Activated T-helper 2 cell treated with anti-CD3 and anti-CD28 coated beads, Interferon-gamma antibody, Interleukin-2, Interleukin-4, amounts not matched to agents 10 μg/mL and 5 μg/mL and 100 μg/mL, durations not matched to agents 14 hours and 24 hours and 36 hours (primary cell): ENCODE measurements at regions of chr18 and their contacts with region 1.

Region 1: DNA sequence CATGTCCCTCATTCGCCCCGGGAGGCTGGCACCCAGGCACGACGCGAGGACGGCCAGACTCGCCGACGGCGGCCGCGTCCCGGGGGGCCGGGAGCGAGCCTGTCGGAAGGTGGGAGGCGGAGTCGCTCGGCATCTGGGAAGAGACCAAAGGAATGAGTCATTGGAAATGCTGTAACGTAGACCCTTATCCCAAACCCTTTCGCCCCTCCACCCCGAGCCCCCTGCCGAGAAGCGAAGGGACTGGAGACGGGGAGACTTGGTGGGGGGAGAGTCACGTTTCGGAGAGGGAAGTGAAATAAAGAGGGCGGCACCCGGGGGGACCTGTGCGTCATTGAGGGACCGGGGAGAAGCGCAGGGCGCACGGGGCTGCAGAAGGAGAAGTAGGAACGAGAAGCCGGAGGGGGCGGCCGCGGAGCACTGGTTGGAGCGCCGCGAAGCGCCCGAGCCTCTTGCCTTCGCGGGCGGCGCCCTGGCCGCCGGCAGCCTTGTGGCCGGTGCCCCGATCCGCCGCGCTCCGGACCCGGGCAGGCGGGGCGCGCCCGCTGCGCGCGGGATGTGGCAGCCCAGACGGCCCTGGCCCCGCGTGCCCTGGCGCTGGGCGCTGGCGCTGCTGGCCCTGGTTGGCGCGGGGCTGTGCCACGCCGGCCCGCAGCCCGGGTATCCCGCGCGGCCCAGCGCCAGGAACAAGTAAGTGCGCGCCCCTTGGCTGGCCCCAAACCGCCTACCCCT is at the start of gene EMILIN2:
- DNase-seq: peak; percentile 49
- H3K4me3 Mint-ChIP-seq: peak within 1 kb of the TSS; percentile 93
- H3K27ac Mint-ChIP-seq: peak within 1 kb of the TSS; percentile 95
- H3K4me1 Mint-ChIP-seq: peaks cover 36% of the 10 kb centered on the region
- H3K27me3 Mint-ChIP-seq: peaks cover 14% of the 10 kb centered on the region
- total RNA-seq, gene EMILIN2: 53.4 and 53.5 TPM in 2 replicates

Region 2: GRCh38 chr18:2536493-2536892 is 310.3 kb before region 1 on chr18:
- intact Hi-C with region 1: no loop called
- DNase-seq: no peak
- H3K4me3 Mint-ChIP-seq: no peak overlapping the region
- H3K27ac Mint-ChIP-seq: no peak overlapping the region
- H3K4me1 Mint-ChIP-seq: no peaks in the 10 kb centered on the region
- H3K27me3 Mint-ChIP-seq: no peaks in the 10 kb centered on the region

Region 3: DNA sequence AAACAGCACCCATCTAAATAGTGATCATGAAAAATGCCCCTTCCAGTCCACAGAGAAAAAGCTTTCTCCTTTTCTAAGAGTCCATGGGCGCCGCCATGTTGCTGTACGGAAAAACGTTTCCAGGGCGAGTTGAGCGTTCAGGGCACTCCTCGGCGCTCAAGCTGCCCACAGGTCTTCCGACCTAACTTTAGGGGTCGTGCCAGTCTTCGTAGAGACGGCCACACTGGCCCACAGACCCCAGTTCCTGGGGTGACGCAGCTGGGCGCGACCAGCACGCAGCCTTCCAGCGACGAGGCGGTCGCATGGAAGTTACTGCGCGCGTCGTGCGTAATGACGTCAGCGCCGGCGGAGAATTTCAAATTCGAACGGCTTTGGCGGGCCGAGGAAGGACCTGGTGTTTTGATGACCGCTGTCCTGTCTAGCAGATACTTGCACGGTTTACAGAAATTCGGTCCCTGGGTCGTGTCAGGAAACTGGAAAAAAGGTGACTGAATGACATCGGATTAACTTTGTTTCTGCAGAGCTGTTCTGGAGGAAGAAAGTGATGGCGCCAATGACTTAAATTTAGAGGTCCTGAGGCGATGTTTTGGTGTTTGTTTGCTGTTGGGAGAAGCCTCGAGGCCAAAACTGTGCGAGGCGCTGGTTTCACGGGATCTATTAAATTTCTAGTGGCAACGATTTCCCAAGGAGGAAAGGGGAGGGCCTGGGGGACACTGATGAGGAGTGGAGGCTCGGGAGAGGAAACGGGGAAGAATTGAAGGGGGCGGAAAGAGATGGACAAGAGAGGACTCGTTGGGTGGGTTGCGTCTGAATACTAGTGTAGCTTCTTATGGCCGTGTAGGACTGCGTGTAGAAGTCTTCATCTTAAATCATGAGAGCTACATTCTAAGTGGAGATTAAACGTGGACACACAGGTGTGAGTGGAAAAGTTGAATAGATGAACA is 275.3 kb before region 1 on chr18 and contains the starts of genes METTL4 and NDC80:
- intact Hi-C with region 1: loop called (anchors 10 kb)
- DNase-seq: peak; percentile 82
- H3K4me3 Mint-ChIP-seq: peak within 1 kb of the TSS; percentile 99
- H3K27ac Mint-ChIP-seq: peak within 1 kb of the TSS; percentile 98
- H3K4me1 Mint-ChIP-seq: peaks cover 52% of the 10 kb centered on the region
- H3K27me3 Mint-ChIP-seq: no peaks in the 10 kb centered on the region
- total RNA-seq, gene METTL4: 17.8 and 18.3 TPM in 2 replicates
- total RNA-seq, gene NDC80: 41.5 and 43.0 TPM in 2 replicates

Region 4: GRCh38 chr18:2797951-2798350 is 48.8 kb before region 1 on chr18:
- intact Hi-C with region 1: loop called (anchors 5 kb)
- DNase-seq: no peak
- H3K4me3 Mint-ChIP-seq: no peak overlapping the region
- H3K27ac Mint-ChIP-seq: no peak overlapping the region
- H3K4me1 Mint-ChIP-seq: peaks cover 3% of the 10 kb centered on the region
- H3K27me3 Mint-ChIP-seq: no peaks in the 10 kb centered on the region

Region 5: GRCh38 chr18:2805970-2806943 is 40.5 kb before region 1 on chr18:
- intact Hi-C with region 1: loop called (anchors 5 kb)
- DNase-seq: no peak
- H3K4me3 Mint-ChIP-seq: no peak overlapping the region
- H3K27ac Mint-ChIP-seq: no peak overlapping the region
- H3K4me1 Mint-ChIP-seq: peaks cover 1% of the 10 kb centered on the region
- H3K27me3 Mint-ChIP-seq: no peaks in the 10 kb centered on the region

Region 6: DNA sequence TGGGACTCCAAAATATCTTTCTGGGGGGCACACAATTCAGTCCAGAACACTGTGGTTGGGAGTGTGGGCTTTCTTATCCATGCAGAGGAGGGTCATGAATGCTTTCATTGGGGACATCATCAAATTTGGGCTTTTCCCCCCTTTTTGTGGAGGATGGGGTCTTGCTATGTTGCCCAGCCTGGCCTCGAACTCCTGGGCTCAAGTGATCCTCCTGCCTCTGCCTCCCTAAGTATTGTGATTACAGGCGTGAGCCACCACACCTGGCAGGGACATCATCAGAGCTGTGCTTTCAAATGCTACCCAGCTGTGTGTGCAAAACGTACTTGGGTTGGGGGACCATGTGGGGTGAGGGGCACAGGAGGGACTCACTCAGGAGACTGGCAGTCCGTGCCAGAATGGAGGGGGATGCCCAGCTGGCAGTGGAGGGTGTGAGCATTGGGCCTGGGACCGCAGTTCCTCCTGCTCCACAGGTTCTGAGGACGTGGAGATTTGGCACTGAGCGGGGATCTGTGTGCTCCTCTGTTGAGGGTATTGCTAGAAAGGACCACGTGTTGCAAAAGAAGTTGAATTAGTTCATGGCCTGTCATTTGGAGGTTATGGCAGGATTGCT is 24.4 kb after region 1 on chr18:
- intact Hi-C with region 1: no loop called
- DNase-seq: no peak
- H3K4me3 Mint-ChIP-seq: no peak overlapping the region
- H3K27ac Mint-ChIP-seq: no peak overlapping the region
- H3K4me1 Mint-ChIP-seq: peaks cover 20% of the 10 kb centered on the region
- H3K27me3 Mint-ChIP-seq: no peaks in the 10 kb centered on the region

Region 7: DNA sequence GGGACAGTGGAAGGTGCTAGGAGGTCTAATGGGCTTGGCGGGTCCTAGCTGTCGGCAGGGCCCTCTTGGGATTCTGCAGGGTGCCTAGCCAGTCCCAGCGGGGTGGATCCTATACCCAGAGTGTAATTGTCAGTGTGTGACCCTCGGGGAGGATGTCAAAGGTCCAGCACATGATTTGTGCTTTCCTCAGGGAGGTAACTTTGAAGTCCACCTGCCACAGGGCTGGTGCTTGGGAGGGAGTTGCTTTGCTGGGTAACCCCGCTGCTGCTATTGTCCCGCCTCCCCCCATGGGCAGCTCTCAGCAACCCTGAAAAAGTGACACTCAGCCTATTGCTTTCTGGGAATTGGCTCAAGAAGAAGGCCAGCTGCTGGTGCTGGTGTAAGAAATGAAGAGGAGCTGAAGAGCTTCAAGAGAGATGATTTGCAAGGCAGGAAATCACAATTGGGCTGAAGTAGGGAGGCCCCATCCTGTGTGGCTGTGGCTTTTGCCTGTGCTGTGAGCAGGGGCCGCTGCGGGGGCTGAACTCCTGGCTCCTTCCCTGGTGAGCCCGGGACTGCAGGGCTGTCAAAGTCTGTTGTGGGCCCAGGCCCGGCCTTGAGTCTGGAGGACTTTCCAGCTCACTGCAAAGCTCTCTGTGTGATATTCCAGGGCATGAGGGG is 36.4 kb after region 1 on chr18:
- intact Hi-C with region 1: loop called (anchors 2 kb)
- DNase-seq: peak; percentile 54
- H3K4me3 Mint-ChIP-seq: peak overlapping the region; percentile 43
- H3K27ac Mint-ChIP-seq: peak overlapping the region; percentile 89
- H3K4me1 Mint-ChIP-seq: peaks cover 35% of the 10 kb centered on the region
- H3K27me3 Mint-ChIP-seq: no peaks in the 10 kb centered on the region

Region 8: GRCh38 chr18:2906704-2907549 is 60.1 kb after region 1 on chr18:
- intact Hi-C with region 1: loop called (anchors 2 kb)
- DNase-seq: peak; percentile 57
- H3K4me3 Mint-ChIP-seq: peak overlapping the region; percentile 84
- H3K27ac Mint-ChIP-seq: peak overlapping the region; percentile 53
- H3K4me1 Mint-ChIP-seq: peaks cover 18% of the 10 kb centered on the region
- H3K27me3 Mint-ChIP-seq: no peaks in the 10 kb centered on the region

Region 9: DNA sequence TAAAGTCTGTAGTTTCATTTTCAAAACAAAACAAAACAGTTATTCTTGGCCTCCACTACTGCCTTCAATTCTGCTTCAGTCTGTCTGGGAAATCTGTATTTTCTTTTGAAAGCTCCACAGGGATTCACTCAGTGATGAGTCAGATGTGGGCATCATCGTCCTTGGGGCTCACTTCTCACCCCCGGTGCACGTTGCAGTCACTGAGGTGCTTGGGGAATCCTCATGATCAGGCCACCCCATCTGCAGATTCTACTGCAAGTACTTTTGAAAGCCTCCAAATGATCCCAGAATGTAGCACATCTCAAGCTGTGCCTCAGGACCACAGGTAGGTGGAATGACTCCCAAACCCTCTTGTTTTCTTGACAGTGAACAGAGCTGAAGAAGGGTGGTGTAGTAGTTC is 131.8 kb after region 1 on chr18:
- intact Hi-C with region 1: loop called (anchors 2 kb)
- DNase-seq: no peak
- H3K4me3 Mint-ChIP-seq: peak overlapping the region; percentile 75
- H3K27ac Mint-ChIP-seq: peak overlapping the region; percentile 91
- H3K4me1 Mint-ChIP-seq: peaks cover 74% of the 10 kb centered on the region
- H3K27me3 Mint-ChIP-seq: no peaks in the 10 kb centered on the region